ENCODE measurements at regions of chr20 and their contacts with region 1.

Region 1: GRCh38 chr20:4444404-4444803 is 277.3 kb upstream of the PRND start:
- DNase-seq: no peak
- ATAC-seq: no peak
- H3K4me3 ChIP-seq: no peak overlapping the region
- H3K27ac ChIP-seq: no peak overlapping the region
- H3K4me1 ChIP-seq: peaks cover 4 to 5% of the 10 kb centered on the region in 2 experiments; a peak in 1 of 4 replicates
- H3K27me3 ChIP-seq: no peaks in the 10 kb centered on the region
- CTCF ChIP-seq: no peak
- POLR2A ChIP-seq: no peak
- RAD21 ChIP-seq: no peak

Region 2: GRCh38 chr20:4332121-4332860 is 112.1 kb before region 1 on chr20:
- CTCF ChIA-PET with region 1: no interaction called
- POLR2A ChIA-PET with region 1: no interaction called
- RAD21 ChIA-PET with region 1: no interaction called
- intact Hi-C with region 1: no loop called
- DNase-seq: no peak
- ATAC-seq: no peak
- H3K4me3 ChIP-seq: no peak overlapping the region
- H3K27ac ChIP-seq: no peak overlapping the region
- H3K4me1 ChIP-seq: no peaks in the 10 kb centered on the region
- H3K27me3 ChIP-seq: no peaks in the 10 kb centered on the region
- CTCF ChIP-seq: no peak
- POLR2A ChIP-seq: no peak
- RAD21 ChIP-seq: no peak

Region 3: GRCh38 chr20:4401601-4402000 is 42.8 kb before region 1 on chr20:
- CTCF ChIA-PET with region 1: no interaction called
- POLR2A ChIA-PET with region 1: no interaction called
- RAD21 ChIA-PET with region 1: no interaction called
- intact Hi-C with region 1: loop called (anchors 5 kb)
- DNase-seq: no peak
- ATAC-seq: no peak
- H3K4me3 ChIP-seq: no peak overlapping the region
- H3K27ac ChIP-seq: no peak overlapping the region
- H3K4me1 ChIP-seq: peaks cover 6 to 7% of the 10 kb centered on the region in 2 experiments
- H3K27me3 ChIP-seq: peaks cover 3% of the 10 kb centered on the region; the same call in 1 of the 2 replicates
- CTCF ChIP-seq: no peak
- POLR2A ChIP-seq: no peak
- RAD21 ChIP-seq: no peak